Esophagus muscularis mucosa (tissue), 4 donors: ENCODE measurements at regions of chr3 and their contacts with region 1.

Region 1: DNA sequence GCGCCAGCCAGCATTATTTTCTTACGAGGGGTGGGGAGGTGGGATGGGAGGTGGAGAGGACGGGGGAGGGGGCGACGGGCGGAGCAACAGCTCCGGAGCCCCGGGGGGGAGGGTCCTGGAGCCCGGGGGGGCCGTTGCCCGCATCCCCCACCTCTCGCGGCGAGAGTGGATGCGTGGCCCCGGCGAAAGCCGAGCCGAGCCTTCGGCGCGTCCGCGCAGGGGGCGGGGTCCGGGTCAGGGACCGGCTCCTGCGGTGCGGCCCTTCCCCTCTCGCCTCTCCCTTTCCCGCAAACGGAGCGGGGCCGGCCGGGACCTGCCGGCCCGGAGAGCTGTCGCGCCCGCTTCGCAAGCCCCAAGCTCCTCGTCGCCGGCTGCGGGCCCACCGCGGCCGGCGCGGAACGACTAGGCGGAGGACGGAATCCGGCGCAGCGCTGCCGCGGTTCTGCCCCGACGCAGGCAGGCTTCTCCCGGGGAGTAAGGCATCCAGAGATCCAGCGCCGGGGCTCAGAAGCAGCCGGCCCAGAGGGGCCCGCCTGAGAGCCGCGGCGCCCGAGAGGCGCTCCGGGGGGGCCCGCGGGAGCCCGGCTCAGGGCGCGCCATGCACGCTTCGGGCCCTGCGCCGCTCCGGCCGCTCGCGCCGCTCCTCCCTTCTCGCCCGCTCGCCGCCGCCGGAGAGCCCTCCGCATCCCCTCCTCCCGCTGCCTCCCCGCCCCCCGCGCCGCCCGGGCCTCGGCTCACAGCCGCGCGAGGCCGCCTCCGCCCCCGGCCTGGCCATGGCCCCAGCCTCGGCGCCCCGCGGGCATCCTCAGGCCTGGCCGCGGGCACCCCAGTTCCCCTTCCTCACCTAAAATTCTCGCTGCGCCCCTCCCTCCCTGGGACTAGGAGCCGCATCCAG is 459 bp upstream of the ADCY5 start:
- DNase-seq: no peak
- H3K4me3 ChIP-seq: peak overlapping the region; percentile 77 to 90 (median 86)
- H3K27ac ChIP-seq: peak overlapping the region; percentile 93 to 97 (median 97)
- H3K4me1 ChIP-seq: peaks cover 12 to 43% (median 39%) of the 10 kb centered on the region in 4 donors
- H3K27me3 ChIP-seq: peaks cover 0 to 34% (median 3%) of the 10 kb centered on the region in 4 donors
- CTCF ChIP-seq: no peak
- EP300 ChIP-seq: no peak
- POLR2A ChIP-seq: no peak

Region 2: GRCh38 chr3:122609798-122610559 is 839.4 kb before region 1 on chr3:
- intact Hi-C with region 1: no loop called
- DNase-seq: no peak
- H3K4me3 ChIP-seq: no peak overlapping the region
- H3K27ac ChIP-seq: no peak overlapping the region
- H3K4me1 ChIP-seq: no peaks in the 10 kb centered on the region
- H3K27me3 ChIP-seq: no peaks in the 10 kb centered on the region
- CTCF ChIP-seq: no peak
- EP300 ChIP-seq: no peak
- POLR2A ChIP-seq: no peak

Region 3: DNA sequence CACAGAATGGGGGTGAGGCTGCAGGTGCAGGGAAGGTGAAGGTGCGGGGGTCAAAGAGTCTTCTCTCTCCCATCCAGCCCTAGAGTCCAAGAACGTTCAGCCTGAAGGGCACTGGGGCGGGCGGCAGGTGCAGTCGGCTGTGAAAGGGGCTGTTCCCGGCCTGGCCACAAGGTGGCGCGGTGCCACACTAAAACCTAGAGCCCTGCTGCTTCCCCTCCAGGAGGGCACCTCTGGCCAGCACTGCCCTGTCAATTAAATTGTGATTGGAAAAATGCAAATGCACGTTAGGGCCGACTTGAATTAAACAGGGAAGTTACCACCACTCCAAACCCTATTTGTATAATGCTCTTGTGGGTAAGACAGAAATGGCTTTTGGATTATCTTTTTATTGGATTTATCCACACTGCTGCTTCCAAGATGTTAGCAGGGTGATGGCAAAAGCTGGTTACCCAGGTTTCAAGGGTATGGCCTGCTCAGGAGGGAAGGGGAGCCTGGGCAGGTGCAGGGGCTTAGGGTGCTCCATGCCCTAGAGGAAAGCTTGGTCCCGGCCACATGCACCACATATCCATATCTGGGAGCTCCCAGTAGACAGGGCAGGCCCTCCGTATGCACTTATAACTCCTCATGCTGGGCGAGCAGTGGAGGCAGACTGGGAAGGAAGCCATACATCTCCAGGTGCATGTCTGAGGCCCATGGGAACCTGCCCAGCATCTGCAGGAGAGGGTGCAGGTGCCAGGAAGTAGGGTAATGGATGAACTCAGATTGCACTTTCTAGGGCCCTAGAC is 120.3 kb before region 1 on chr3:
- intact Hi-C with region 1: loop called (anchors 5 kb)
- DNase-seq: peak; percentile 94
- H3K4me3 ChIP-seq: no peak overlapping the region
- H3K27ac ChIP-seq: peak overlapping the region; percentile 77 to 88 (median 83)
- H3K4me1 ChIP-seq: peaks cover 65 to 99% (median 88%) of the 10 kb centered on the region in 4 donors
- H3K27me3 ChIP-seq: no peaks in the 10 kb centered on the region
- CTCF ChIP-seq: peak; percentile 94 to 97 (median 95)
- EP300 ChIP-seq: no peak
- POLR2A ChIP-seq: no peak

Region 4: GRCh38 chr3:123375014-123375940 is 74.1 kb before region 1 on chr3:
- intact Hi-C with region 1: loop called (anchors 10 kb)
- DNase-seq: no peak
- H3K4me3 ChIP-seq: no peak overlapping the region
- H3K27ac ChIP-seq: peak overlapping the region; percentile 85 to 97 (median 94)
- H3K4me1 ChIP-seq: peaks cover 82 to 100% (median 99%) of the 10 kb centered on the region in 4 donors
- H3K27me3 ChIP-seq: no peaks in the 10 kb centered on the region
- CTCF ChIP-seq: peak in 2 of 3 experiments; percentile 17 to 29
- EP300 ChIP-seq: peak; percentile 61
- POLR2A ChIP-seq: no peak

Region 5: GRCh38 chr3:123406598-123406997 is 42.8 kb before region 1 on chr3:
- intact Hi-C with region 1: loop called (anchors 5 kb)
- DNase-seq: no peak
- H3K4me3 ChIP-seq: no peak overlapping the region
- H3K27ac ChIP-seq: peak overlapping the region; percentile 91 to 97 (median 94)
- H3K4me1 ChIP-seq: peaks cover 66 to 98% (median 96%) of the 10 kb centered on the region in 4 donors
- H3K27me3 ChIP-seq: no peaks in the 10 kb centered on the region
- CTCF ChIP-seq: no peak
- EP300 ChIP-seq: peak; percentile 42
- POLR2A ChIP-seq: no peak

Region 6: DNA sequence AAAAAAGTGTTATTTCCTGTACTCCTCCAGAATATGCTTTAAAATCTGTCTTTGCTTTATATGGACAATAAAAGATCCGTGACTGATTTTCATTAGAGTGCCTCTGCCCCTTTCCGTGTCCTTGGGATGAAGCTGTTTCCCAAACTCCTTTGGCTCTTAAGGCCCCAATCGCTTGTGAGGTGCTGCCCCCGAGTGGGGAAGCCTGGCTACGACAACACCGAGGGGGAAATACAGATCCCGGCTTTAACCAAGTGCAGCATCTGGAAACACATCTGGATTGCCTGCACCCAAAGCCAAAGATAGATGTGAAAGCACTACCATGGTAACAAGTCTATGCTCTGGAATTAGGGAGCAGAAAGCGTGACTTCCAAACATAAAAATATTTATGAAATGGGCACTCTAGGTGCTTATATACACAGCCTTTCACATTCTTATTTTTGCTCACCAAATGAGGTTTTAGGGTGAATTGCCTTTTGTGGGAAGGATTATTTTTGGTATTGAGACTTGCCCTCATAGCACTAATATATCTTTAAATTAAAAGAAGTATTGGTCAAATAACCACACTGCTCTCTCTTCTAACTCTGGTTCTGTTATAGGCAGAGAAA is 40.2 kb after region 1 on chr3:
- intact Hi-C with region 1: loop called (anchors 2 kb)
- DNase-seq: no peak
- H3K4me3 ChIP-seq: no peak overlapping the region
- H3K27ac ChIP-seq: peak overlapping the region; percentile 60 to 74 (median 68)
- H3K4me1 ChIP-seq: peaks cover 19 to 37% (median 29%) of the 10 kb centered on the region in 4 donors
- H3K27me3 ChIP-seq: no peaks in the 10 kb centered on the region
- CTCF ChIP-seq: peak; percentile 91 to 95 (median 91)
- EP300 ChIP-seq: no peak
- POLR2A ChIP-seq: no peak

Region 7: DNA sequence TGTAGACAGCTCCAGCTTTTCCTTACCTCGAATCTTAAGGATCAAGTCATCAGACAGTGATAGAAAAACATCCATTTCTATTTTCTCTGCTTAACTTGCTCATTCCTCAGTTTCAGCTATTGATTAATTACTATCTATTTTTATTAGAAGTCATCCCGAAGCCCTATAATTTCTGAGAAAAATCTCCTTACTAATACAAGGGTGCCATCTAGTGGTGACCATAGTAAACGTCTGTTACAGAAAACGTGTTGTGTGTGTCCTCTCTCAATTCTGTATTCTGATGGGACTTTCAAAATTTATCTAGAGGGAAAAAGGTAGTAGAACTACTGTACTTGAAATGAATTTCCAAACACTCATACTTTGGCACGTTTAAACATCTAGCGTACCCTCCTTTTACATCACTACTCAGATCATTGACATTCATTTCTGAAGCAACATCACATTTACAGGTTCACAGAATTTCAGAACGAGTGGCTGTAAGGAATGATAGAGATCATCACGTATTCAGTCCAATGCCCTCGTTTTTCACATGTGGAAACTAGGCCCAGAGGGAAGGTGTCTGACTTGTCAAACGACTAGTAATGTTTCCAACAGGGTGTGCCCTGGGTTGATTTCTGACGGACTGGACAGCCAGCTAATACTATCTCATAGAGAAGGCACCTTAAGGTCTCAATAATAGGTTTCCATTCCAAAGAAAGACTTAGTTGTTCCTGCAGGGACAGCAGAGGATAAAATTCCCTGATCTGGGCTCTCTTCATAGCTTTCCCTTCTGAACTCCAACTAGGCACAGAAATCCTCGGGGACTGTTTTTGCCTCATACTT is 109.9 kb after region 1 on chr3:
- intact Hi-C with region 1: loop called (anchors 5 kb)
- DNase-seq: no peak
- H3K4me3 ChIP-seq: no peak overlapping the region
- H3K27ac ChIP-seq: no peak overlapping the region
- H3K4me1 ChIP-seq: peaks cover 0 to 17% (median 5%) of the 10 kb centered on the region in 4 donors
- H3K27me3 ChIP-seq: no peaks in the 10 kb centered on the region
- CTCF ChIP-seq: peak; percentile 73 to 79 (median 74)
- EP300 ChIP-seq: no peak
- POLR2A ChIP-seq: no peak

Region 8: DNA sequence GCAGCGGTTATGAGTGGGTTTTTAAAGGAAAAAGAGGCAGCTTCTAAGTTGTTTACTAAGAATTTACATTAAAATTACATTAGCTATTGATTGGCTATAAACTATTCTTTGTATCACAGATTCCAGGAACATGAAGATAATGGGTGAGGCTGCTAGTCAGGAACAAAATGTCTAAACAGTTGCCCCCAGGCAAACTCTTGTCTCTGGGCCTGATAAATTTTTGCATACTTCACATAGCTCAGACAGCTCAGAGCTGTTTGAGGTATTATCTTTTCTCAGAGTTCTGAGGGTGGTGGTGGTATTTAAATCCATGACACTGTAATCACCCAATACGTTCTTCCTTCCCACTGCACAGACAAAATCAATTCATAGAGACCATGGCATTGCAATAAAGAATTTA is 137.6 kb after region 1 on chr3:
- intact Hi-C with region 1: no loop called
- DNase-seq: peak; percentile 8
- H3K4me3 ChIP-seq: no peak overlapping the region
- H3K27ac ChIP-seq: no peak overlapping the region
- H3K4me1 ChIP-seq: peaks cover 12 to 46% (median 26%) of the 10 kb centered on the region in 4 donors
- H3K27me3 ChIP-seq: no peaks in the 10 kb centered on the region
- CTCF ChIP-seq: no peak
- EP300 ChIP-seq: no peak
- POLR2A ChIP-seq: no peak